CD8-positive, alpha-beta T cell (primary cell): ENCODE measurements at regions of chr21 and their contacts with region 1.

Region 1: DNA sequence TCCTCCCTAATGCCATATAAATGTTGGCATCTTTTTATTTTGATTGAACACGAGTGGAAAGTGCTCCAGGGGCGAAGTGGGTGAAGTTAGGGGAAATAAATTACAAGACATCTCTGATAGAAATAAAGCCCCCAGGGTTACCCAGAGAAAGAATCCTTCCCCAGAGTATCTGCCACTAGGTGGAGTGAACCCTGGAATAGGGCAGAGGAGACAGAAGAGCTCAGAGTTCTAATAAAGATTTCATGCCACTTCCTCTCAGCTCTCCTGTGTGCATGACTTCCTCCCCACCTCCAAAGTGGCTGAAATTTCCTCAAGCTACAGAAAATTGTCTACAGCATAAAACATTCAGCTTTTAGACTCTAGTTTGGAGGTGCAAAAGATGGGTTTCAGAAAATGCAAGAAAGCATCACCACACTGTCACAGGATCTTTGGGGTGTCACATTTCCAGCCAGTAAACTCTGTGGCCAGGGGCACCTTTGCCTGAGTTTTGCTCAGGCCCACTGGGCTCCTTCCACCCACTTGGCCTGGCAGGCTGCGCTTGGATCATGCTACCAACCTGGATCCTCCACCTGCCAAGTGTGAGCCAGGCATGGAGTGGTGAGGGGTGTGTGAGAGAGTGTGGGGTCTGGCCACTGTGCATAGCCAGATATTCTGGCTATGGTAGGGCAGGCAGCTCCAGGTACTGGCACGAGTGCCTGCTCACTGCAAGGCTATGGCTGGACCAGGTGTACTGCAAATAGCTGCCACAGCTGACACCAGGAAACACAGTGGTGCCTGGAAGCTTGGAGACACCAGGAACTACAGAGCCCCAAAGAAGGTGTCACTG is 208.8 kb upstream of the USP25 start:
- DNase-seq: peak in 2 of 9 experiments; percentile 8 to 31
- ATAC-seq: peak; percentile 38
- H3K4me3 ChIP-seq: no peak overlapping the region
- H3K4me3 Mint-ChIP-seq: no peak overlapping the region
- H3K27ac ChIP-seq: no peak overlapping the region
- H3K27ac Mint-ChIP-seq: peak overlapping the region; percentile 25
- H3K4me1 ChIP-seq: peaks cover 11% of the 10 kb centered on the region
- H3K4me1 Mint-ChIP-seq: peaks cover 15% of the 10 kb centered on the region
- H3K27me3 ChIP-seq: no peaks in the 10 kb centered on the region
- H3K27me3 Mint-ChIP-seq: no peaks in the 10 kb centered on the region
- CTCF ChIP-seq: peak; percentile 26

Region 2: GRCh38 chr21:15534450-15534886 is 13.4 kb after region 1 on chr21:
- CTCF ChIA-PET with region 1: interaction called, 13 read pairs
- POLR2A ChIA-PET with region 1: interaction called, 3 read pairs
- intact Hi-C with region 1: no loop called
- DNase-seq: peak in 2 of 9 experiments; percentile 10 to 18
- ATAC-seq: peak; percentile 29
- H3K4me3 ChIP-seq: no peak overlapping the region
- H3K4me3 Mint-ChIP-seq: no peak overlapping the region
- H3K27ac ChIP-seq: no peak overlapping the region
- H3K27ac Mint-ChIP-seq: no peak overlapping the region
- H3K4me1 ChIP-seq: no peaks in the 10 kb centered on the region
- H3K4me1 Mint-ChIP-seq: peaks cover 10% of the 10 kb centered on the region
- H3K27me3 ChIP-seq: no peaks in the 10 kb centered on the region
- H3K27me3 Mint-ChIP-seq: peaks cover 3% of the 10 kb centered on the region
- CTCF ChIP-seq: no peak

Region 3: GRCh38 chr21:15552914-15553494 is 32.0 kb after region 1 on chr21:
- CTCF ChIA-PET with region 1: interaction called, 23 read pairs
- POLR2A ChIA-PET with region 1: no interaction called
- intact Hi-C with region 1: no loop called
- DNase-seq: peak in 2 of 9 experiments; percentile 19 to 33
- ATAC-seq: no peak
- H3K4me3 ChIP-seq: no peak overlapping the region
- H3K4me3 Mint-ChIP-seq: no peak overlapping the region
- H3K27ac ChIP-seq: no peak overlapping the region
- H3K27ac Mint-ChIP-seq: no peak overlapping the region
- H3K4me1 ChIP-seq: peaks cover 8% of the 10 kb centered on the region
- H3K4me1 Mint-ChIP-seq: peaks cover 14% of the 10 kb centered on the region
- H3K27me3 ChIP-seq: no peaks in the 10 kb centered on the region
- H3K27me3 Mint-ChIP-seq: no peaks in the 10 kb centered on the region
- CTCF ChIP-seq: peak; percentile 71